ENCODE measurements at regions of chr14 and their contacts with region 1.

Region 1: DNA sequence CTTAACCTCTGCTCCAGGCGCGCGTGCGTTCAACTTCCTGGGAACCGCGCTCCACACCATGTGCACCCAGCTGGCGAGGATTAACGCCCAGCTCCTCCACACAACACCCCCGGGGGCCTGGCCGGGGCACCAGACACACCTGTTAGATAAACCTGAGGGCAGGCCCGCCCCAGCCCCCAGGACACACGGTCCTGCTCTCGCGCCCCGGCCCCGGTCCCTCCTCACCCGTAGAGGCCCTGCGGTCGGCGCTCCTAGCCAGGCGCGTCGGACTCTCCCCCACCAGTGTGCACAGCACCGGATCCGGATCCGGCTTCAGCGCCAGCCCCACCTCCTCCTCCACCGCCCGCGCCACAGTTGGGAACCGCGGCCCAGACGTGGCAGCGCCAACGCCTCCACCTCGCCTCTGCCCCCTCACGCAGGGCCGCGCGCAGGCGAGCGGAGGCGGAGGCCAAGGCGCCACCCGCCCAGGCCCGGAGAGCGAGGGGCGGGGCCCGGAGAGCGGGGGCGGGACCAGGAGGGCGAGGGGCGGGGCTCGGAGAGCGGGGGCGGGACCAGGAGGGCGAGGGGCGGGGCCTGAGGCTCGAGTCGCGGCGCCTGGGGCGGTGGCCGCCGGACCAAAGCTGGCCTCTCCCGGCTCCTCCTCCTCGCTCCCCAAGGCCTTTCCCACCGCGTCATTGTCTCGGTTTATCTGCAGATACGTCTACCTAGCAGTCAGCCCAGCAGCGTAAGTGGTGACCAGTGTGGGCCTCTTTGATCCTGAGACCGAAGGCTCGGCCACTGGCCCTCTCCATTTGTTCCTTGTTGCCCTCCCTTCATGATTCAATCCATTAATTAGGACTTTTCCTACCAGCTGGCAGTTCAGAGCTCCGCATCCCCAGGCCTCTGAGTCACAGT is at the start of gene GNPNAT1:
- DNase-seq: peak; percentile 92 to 95
- ATAC-seq: peak; percentile 97
- H3K4me3 ChIP-seq: peak within 1 kb of the TSS; percentile 28 to 61
- H3K27ac ChIP-seq: peak within 1 kb of the TSS; percentile 68 to 99
- H3K4me1 ChIP-seq: no peaks in the 10 kb centered on the region
- H3K27me3 ChIP-seq: no peaks in the 10 kb centered on the region
- total RNA-seq, gene GNPNAT1: 17.6 to 32.4 TPM

Region 2: DNA sequence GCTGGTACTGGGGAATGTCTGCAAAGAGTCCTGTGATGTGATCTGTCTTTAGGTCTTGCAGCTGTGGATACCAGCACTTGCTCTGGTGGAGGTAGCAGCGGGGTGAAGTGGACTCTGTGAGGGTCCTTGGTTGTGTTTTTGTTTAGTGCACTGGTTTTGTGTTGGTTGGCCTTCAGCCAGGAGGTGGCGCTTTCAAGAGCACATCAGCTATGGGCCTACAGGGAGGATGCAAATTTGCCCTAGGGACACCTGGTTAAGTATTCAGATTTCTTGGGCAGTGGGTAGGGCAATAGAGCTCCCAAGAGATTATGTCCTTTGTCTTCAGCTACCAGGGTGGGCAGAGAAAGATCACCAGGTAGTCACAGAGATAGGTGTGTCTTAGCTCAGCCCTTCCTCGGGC is 413.5 kb before region 1 on chr14:
- intact Hi-C with region 1: no loop called
- DNase-seq: no peak
- ATAC-seq: no peak
- H3K4me3 ChIP-seq: no peak overlapping the region
- H3K27ac ChIP-seq: no peak overlapping the region
- H3K4me1 ChIP-seq: no peaks in the 10 kb centered on the region
- H3K27me3 ChIP-seq: no peaks in the 10 kb centered on the region

Region 3: GRCh38 chr14:52538623-52539022 is 252.8 kb before region 1 on chr14:
- intact Hi-C with region 1: no loop called
- DNase-seq: no peak
- ATAC-seq: no peak
- H3K4me3 ChIP-seq: no peak overlapping the region
- H3K27ac ChIP-seq: no peak overlapping the region
- H3K4me1 ChIP-seq: no peaks in the 10 kb centered on the region
- H3K27me3 ChIP-seq: no peaks in the 10 kb centered on the region

Region 4: GRCh38 chr14:52711666-52712065 is 79.8 kb before region 1 on chr14:
- intact Hi-C with region 1: no loop called
- DNase-seq: no peak
- ATAC-seq: no peak
- H3K4me3 ChIP-seq: no peak overlapping the region
- H3K27ac ChIP-seq: no peak overlapping the region
- H3K4me1 ChIP-seq: peaks cover 0 to 5% of the 10 kb centered on the region in 2 donors
- H3K27me3 ChIP-seq: no peaks in the 10 kb centered on the region

Region 5: DNA sequence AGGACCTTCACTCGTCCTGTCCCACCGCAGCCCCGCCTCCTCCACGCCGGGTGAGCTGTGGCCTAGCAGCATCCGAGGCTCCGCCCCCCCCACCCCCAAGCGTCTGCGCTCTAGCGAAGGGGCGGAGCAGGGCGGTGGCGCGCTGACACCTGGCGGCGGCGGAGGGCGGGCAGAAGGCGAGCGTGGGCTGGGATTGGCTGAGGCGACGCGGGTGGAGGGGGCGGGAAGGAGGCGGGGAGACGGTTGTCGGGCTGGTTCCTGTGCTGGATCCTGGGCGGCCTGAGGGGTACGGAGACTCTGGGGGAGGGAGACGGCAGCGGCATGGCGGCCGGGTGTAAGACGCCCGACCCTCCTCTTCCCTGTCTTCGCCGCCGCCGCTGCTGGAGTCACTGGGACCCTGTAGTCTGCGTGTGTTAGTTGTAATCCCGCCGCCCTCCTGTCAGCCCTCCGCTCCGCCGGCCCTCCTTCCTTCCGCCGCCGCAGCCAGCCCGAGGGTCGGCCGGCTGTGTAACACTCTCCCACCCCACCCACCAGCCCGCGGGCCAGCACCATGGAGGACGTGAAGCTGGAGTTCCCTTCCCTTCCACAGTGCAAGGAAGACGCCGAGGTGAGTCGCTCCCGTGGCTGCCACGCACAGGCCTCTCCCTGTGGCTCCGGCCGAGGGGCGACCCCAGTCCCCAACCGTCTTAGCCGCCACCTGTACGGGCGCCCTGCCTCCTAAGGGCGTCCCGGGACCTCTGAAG is 61.4 kb before region 1 on chr14 and contains the start of gene STYX:
- intact Hi-C with region 1: loop called in 1 of 2 experiments (anchors 10 kb)
- DNase-seq: peak; percentile 99 to 100
- ATAC-seq: peak; percentile 100
- H3K4me3 ChIP-seq: peak within 1 kb of the TSS; percentile 65 to 77
- H3K27ac ChIP-seq: peak within 1 kb of the TSS in 1 of 2 donors; percentile 53
- H3K4me1 ChIP-seq: no peaks in the 10 kb centered on the region
- H3K27me3 ChIP-seq: no peaks in the 10 kb centered on the region
- total RNA-seq, gene STYX: 14.3 to 15.5 TPM

Region 6: GRCh38 chr14:52748647-52749292 is 42.7 kb before region 1 on chr14:
- intact Hi-C with region 1: no loop called
- DNase-seq: no peak
- ATAC-seq: no peak
- H3K4me3 ChIP-seq: no peak overlapping the region
- H3K27ac ChIP-seq: no peak overlapping the region
- H3K4me1 ChIP-seq: no peaks in the 10 kb centered on the region
- H3K27me3 ChIP-seq: no peaks in the 10 kb centered on the region